ENCODE measurements at regions of chr10 and their contacts with region 1.

Region 1: GRCh38 chr10:29857843-29858701 is 201.3 kb downstream of the JCAD start:
- DNase-seq: peak; percentile 84
- H3K4me3 ChIP-seq: no peak overlapping the region
- H3K27ac ChIP-seq: no peak overlapping the region
- H3K4me1 ChIP-seq: peaks cover 40% of the 10 kb centered on the region
- H3K27me3 ChIP-seq: no peaks in the 10 kb centered on the region
- CTCF ChIP-seq: peak; percentile 74 to 91

Region 2: DNA sequence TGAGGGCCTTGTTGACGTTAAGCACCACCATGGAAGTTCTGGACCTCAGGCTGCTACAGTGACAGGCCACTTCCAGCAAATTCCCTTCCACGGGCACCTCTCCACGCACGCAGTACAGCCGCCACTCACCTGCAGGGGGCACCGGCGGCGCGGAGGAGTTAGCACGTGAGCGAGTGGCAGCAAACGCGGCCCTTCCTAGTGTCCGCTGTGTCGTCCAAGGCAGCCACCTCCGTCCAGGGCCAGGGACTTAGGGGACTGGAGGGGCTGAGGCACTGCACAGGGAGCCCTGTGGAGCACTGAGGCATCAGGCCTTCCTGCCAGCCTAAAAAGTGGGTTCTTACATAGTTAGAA is 387.7 kb before region 1 on chr10:
- CTCF ChIA-PET with region 1: no interaction called
- dilution Hi-C with region 1: no loop called
- in situ Hi-C with region 1: no loop called
- intact Hi-C with region 1: no loop called
- DNase-seq: no peak
- H3K4me3 ChIP-seq: no peak overlapping the region
- H3K27ac ChIP-seq: no peak overlapping the region
- H3K4me1 ChIP-seq: peaks cover 26% of the 10 kb centered on the region
- H3K27me3 ChIP-seq: no peaks in the 10 kb centered on the region
- CTCF ChIP-seq: peak; percentile 23 to 37

Region 3: DNA sequence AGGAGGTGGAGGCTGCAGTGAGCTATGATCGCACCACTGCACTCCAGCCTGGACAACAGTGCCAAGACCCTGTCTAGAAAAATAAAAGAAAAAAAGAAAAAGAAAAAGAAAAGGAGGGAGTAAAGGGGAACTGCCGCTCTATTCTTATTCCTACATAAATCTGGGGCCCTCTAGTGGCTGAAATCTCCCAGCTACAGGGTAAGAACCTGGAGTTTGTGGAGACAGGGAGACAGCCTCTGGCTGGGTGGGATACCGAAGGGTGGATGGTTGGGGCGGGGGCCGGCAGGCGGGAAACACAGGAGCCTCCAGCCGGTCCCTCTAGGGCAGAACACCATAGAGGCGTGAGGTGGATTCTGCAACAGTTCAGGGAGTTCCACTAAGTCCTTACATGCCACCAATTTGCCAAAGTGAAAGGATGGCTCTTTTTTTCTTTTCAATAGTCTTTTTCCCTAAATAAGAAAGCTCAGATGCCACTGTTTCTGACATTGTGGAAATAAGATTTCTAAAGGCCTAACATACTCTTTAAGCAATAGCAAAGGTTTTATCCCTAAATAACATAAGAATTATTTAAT is 340.6 kb before region 1 on chr10:
- CTCF ChIA-PET with region 1: no interaction called
- dilution Hi-C with region 1: no loop called
- in situ Hi-C with region 1: no loop called
- intact Hi-C with region 1: loop called (anchors 5 kb)
- DNase-seq: no peak
- H3K4me3 ChIP-seq: no peak overlapping the region
- H3K27ac ChIP-seq: no peak overlapping the region
- H3K4me1 ChIP-seq: peaks cover 4% of the 10 kb centered on the region
- H3K27me3 ChIP-seq: no peaks in the 10 kb centered on the region
- CTCF ChIP-seq: peak; percentile 52 to 54

Region 4: DNA sequence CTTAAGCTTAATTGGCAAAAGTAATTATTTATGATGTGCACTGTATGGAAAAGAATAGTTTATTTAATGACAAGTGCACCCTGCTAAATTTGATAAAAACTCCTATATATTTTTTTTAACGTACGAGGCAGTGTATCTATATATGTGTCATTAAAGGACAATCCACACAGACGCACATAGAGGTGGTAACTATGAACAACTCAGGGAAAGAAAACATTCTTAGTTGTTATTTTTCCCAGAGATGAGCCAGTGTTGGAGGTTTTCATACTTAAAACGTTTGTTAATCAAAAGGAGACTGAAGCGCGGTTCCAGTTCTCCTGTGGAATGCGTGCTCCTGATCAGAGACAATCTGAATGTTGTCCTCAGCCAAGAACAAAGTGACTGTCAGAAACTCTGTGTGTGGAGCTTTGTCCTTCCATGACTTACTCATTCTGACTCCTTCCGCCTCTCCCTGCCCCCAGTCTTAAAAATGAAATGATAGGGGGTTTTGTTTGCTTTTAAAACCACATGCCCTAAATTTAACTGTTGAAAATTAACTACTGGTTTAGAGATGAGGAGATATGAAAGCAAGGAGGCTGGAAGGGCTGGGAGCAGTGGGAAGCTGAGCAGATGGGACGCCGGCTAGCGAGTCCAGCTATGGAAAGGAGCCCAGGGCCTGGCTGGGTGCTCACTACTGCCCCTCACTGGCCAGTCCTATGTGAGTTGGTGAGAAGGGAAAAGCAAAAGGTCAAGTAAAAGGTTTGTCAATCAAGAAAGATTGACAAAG is 322.9 kb before region 1 on chr10:
- CTCF ChIA-PET with region 1: no interaction called
- dilution Hi-C with region 1: no loop called
- in situ Hi-C with region 1: no loop called
- intact Hi-C with region 1: loop called (anchors 5 kb)
- DNase-seq: peak; percentile 83
- H3K4me3 ChIP-seq: peak overlapping the region in 2 of 3 experiments; percentile 11 to 19
- H3K27ac ChIP-seq: peak overlapping the region; percentile 70
- H3K4me1 ChIP-seq: peaks cover 25% of the 10 kb centered on the region
- H3K27me3 ChIP-seq: no peaks in the 10 kb centered on the region
- CTCF ChIP-seq: peak; percentile 81 to 89

Region 5: GRCh38 chr10:29590915-29591650 is 267.0 kb before region 1 on chr10:
- CTCF ChIA-PET with region 1: no interaction called
- dilution Hi-C with region 1: no loop called
- in situ Hi-C with region 1: no loop called
- intact Hi-C with region 1: loop called (anchors 2 kb)
- DNase-seq: no peak
- H3K4me3 ChIP-seq: no peak overlapping the region
- H3K27ac ChIP-seq: peak overlapping the region; percentile 100
- H3K4me1 ChIP-seq: peaks cover 36% of the 10 kb centered on the region
- H3K27me3 ChIP-seq: no peaks in the 10 kb centered on the region
- CTCF ChIP-seq: no peak

Region 6: DNA sequence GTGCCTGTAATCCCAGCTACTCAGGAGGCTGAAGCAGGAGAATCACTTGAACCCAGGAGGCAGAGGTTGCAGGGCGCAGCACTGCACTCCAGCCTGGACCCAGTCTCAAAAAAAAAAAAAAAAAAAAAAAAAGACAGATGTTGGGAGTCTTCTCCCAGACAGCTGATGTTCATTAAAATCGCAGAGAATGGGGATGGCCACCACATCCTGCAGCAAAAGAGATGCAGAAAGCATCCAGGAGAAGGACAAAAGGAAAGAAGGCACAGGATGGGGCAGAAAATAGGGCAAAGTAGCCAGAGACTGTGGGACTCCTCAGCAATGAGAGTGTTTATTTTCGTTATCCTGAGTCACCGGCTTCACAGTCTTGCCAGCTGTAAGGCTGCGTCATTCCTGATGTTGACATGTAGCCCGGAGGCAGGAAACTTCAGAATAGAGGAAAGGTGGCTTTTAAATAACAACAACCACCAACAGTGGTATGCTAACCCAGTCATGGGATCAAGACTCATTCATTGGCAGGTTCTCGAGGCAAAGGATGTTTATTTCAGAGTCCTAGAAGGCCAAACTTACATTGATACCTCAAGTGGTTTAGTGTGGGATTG is 73.8 kb before region 1 on chr10:
- CTCF ChIA-PET with region 1: no interaction called
- dilution Hi-C with region 1: no loop called
- in situ Hi-C with region 1: no loop called
- intact Hi-C with region 1: loop called (anchors 1 kb)
- DNase-seq: peak; percentile 100
- H3K4me3 ChIP-seq: no peak overlapping the region
- H3K27ac ChIP-seq: peak overlapping the region; percentile 91
- H3K4me1 ChIP-seq: peaks cover 15% of the 10 kb centered on the region
- H3K27me3 ChIP-seq: no peaks in the 10 kb centered on the region
- CTCF ChIP-seq: no peak

Region 7: GRCh38 chr10:29946953-29947700 is 89.1 kb after region 1 on chr10:
- CTCF ChIA-PET with region 1: no interaction called
- dilution Hi-C with region 1: no loop called
- in situ Hi-C with region 1: no loop called
- intact Hi-C with region 1: loop called (anchors 5 kb)
- DNase-seq: peak; percentile 88
- H3K4me3 ChIP-seq: no peak overlapping the region
- H3K27ac ChIP-seq: peak overlapping the region; percentile 97
- H3K4me1 ChIP-seq: peaks cover 50% of the 10 kb centered on the region
- H3K27me3 ChIP-seq: no peaks in the 10 kb centered on the region
- CTCF ChIP-seq: no peak

Region 8: DNA sequence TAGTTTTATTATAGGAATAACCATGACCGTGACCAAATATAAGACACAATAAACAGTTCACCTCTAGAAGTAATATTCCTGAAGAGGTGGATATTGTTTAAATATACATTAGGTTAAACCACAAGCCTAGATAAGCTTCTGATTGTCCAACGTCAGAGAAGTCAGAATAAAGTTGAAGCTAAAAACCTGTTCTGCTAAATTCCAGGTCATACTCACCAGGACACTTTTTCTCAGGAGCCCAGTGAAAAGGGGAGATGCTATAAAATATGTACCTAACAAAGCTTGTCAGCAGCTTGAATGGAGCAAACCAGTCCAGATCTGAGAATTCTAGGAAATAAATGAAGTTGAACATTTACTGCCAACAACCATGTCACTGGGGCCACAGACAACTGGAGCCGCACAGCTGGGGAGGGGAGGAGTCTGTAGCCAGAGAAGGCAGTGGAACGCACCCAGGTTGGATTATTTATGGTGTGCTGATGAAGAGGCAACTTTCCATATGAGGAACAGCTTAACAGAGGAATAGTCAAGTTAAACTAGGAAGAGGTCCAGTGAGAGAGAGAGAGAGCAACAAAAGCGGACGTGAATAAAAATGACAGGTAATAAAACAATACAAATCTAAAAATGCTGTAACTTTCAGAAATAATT is 982.5 kb after region 1 on chr10:
- CTCF ChIA-PET with region 1: no interaction called
- dilution Hi-C with region 1: no loop called
- in situ Hi-C with region 1: no loop called
- intact Hi-C with region 1: no loop called
- DNase-seq: no peak
- H3K4me3 ChIP-seq: no peak overlapping the region
- H3K27ac ChIP-seq: no peak overlapping the region
- H3K4me1 ChIP-seq: no peaks in the 10 kb centered on the region
- H3K27me3 ChIP-seq: no peaks in the 10 kb centered on the region
- CTCF ChIP-seq: no peak